Caco-2 (cell line): ENCODE measurements at regions of chr1 and their contacts with region 1.

Region 1: DNA sequence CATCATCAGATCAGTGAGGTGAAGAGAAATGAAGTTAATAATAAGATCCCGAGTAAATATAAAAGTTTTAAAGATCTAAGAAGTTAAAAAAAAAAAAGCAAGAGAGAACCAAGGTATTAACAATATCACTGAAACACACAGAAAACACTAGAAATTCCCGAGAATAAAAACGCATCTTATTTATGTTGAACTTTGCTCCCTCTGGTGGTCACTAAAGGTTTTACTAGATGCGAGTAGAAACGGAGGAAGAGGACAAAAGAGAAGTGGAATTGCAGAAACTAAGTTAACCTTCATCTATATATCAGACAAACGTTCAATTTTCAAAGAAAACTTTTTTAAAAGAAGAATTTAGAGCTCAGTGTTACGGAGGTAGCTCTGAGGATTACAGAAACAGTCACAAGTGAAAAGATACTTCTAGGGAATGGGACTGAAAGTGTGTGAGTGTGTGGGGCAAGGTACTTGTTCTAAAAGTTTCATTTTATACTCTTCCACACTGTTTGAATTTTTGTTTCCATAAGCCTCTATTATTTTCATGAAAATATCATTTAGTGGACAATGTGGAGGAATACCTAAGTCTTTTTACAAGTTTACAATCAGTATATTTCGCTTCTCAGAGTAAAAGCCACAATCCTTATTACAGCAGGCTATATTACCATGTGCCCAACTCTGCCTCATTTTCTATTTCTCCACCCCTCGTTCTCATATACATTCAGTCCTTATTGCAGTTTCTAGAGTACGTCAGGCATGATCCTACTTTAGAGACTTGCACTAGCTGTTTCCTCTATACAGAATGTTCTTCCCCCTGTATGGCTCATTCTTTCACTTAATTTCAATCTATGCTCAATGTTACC is 19.7 kb downstream of the ACBD6 start:
- DNase-seq: peak in 1 of 2 experiments; percentile 41
- H3K4me3 ChIP-seq: no peak overlapping the region
- H3K4me3 Mint-ChIP-seq: no peak overlapping the region
- H3K27ac Mint-ChIP-seq: no peak overlapping the region
- H3K4me1 ChIP-seq: no peaks in the 10 kb centered on the region
- H3K4me1 Mint-ChIP-seq: no peaks in the 10 kb centered on the region
- H3K27me3 ChIP-seq: no peaks in the 10 kb centered on the region
- H3K27me3 Mint-ChIP-seq: no peaks in the 10 kb centered on the region
- CTCF ChIP-seq: peak; percentile 65 to 71

Region 2: GRCh38 chr1:180188091-180188506 is 294.6 kb before region 1 on chr1:
- CTCF ChIA-PET with region 1: interaction called, 3 read pairs
- POLR2A ChIA-PET with region 1: no interaction called
- intact Hi-C with region 1: loop called (anchors 1 kb)
- DNase-seq: peak; percentile 80 to 82
- H3K4me3 ChIP-seq: no peak overlapping the region
- H3K4me3 Mint-ChIP-seq: no peak overlapping the region
- H3K27ac Mint-ChIP-seq: no peak overlapping the region
- H3K4me1 ChIP-seq: no peaks in the 10 kb centered on the region
- H3K4me1 Mint-ChIP-seq: peaks cover 6% of the 10 kb centered on the region
- H3K27me3 ChIP-seq: no peaks in the 10 kb centered on the region
- H3K27me3 Mint-ChIP-seq: no peaks in the 10 kb centered on the region
- CTCF ChIP-seq: peak; percentile 85 to 95

Region 3: DNA sequence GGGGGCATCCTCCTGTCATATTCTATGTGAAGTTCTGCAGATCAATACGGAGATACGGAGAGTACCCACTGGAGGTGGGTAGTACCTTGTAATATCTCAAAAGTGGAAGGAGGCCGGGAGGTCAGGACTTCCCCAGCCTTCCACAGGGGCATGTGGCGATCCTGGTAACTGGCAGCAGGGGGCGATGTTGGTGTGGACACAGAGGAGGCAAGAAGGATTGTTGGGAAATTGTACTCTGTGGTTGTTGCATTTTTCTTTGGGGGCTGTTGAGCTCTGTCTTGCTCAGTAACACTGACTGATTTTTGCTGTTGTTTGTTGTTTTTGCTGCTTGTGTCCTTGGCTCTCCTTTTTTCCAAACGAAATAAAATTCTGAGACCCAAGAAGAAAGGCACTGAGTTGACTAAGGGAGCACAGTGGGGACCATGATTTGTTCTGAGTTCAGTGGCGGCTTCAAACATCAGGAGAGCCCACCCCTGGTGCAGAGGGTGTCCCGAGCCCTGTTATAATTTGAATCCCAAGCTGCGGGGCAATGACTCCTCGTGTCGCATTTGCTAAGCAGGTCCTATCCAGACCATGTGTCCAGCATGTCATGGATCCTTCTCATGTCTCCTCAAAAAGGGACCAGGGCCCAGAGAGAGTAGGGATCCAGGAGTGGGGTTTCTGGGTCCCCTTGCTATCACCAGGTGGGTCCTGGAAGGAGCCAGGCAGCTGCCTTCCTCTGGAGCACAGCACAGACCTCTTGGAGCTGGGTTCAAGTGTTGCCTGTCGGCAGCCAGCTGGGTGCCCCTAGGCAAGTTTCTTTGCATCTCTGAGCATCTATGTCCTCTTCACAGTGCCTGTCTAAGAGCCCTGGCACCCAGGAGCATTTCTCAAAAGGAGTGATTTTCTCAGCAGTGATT is 229.8 kb before region 1 on chr1:
- CTCF ChIA-PET with region 1: no interaction called
- POLR2A ChIA-PET with region 1: no interaction called
- intact Hi-C with region 1: loop called (anchors 1 kb)
- DNase-seq: peak; percentile 78 to 80
- H3K4me3 ChIP-seq: no peak overlapping the region
- H3K4me3 Mint-ChIP-seq: no peak overlapping the region
- H3K27ac Mint-ChIP-seq: no peak overlapping the region
- H3K4me1 ChIP-seq: no peaks in the 10 kb centered on the region
- H3K4me1 Mint-ChIP-seq: no peaks in the 10 kb centered on the region
- H3K27me3 ChIP-seq: no peaks in the 10 kb centered on the region
- H3K27me3 Mint-ChIP-seq: no peaks in the 10 kb centered on the region
- CTCF ChIP-seq: peak; percentile 63 to 85

Region 4: DNA sequence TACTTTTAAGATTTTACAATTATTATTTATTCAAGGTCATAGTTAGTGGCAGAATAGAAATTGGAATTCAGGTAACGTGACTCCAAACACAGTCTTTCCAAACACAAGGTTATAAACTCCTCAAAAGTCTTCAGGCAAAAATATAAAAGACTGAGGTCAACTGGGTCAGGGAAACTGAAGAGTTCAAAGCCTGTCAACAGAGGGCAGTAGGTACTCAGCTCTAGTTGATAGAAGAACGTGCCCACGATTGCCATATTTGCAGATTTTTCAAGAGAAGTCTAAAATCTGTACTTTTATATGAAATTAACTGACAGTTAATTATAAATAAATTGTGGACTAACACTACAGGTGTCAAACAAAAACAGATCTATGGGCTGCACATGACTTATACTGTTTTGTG is 117.6 kb before region 1 on chr1:
- CTCF ChIA-PET with region 1: no interaction called
- POLR2A ChIA-PET with region 1: no interaction called
- intact Hi-C with region 1: loop called (anchors 1 kb)
- DNase-seq: no peak
- H3K4me3 ChIP-seq: no peak overlapping the region
- H3K4me3 Mint-ChIP-seq: no peak overlapping the region
- H3K27ac Mint-ChIP-seq: no peak overlapping the region
- H3K4me1 ChIP-seq: no peaks in the 10 kb centered on the region
- H3K4me1 Mint-ChIP-seq: no peaks in the 10 kb centered on the region
- H3K27me3 ChIP-seq: no peaks in the 10 kb centered on the region
- H3K27me3 Mint-ChIP-seq: no peaks in the 10 kb centered on the region
- CTCF ChIP-seq: peak; percentile 43 to 52

Region 5: GRCh38 chr1:180502360-180503273 is 20.0 kb after region 1 on chr1 and contains the start of gene ACBD6:
- CTCF ChIA-PET with region 1: no interaction called
- POLR2A ChIA-PET with region 1: interaction called, 10 read pairs
- intact Hi-C with region 1: no loop called
- DNase-seq: peak; percentile 86 to 91
- H3K4me3 ChIP-seq: peak within 1 kb of the TSS; percentile 67
- H3K4me3 Mint-ChIP-seq: peak within 1 kb of the TSS; percentile 96
- H3K27ac Mint-ChIP-seq: peak within 1 kb of the TSS; percentile 96
- H3K4me1 ChIP-seq: peaks cover 7% of the 10 kb centered on the region; the same call in 1 of the 2 replicates
- H3K4me1 Mint-ChIP-seq: no peaks in the 10 kb centered on the region
- H3K27me3 ChIP-seq: no peaks in the 10 kb centered on the region
- H3K27me3 Mint-ChIP-seq: no peaks in the 10 kb centered on the region
- CTCF ChIP-seq: peak in 1 of 2 experiments; percentile 17
- total RNA-seq, gene ACBD6: 74.7 and 75.6 TPM in 2 replicates

Region 6: DNA sequence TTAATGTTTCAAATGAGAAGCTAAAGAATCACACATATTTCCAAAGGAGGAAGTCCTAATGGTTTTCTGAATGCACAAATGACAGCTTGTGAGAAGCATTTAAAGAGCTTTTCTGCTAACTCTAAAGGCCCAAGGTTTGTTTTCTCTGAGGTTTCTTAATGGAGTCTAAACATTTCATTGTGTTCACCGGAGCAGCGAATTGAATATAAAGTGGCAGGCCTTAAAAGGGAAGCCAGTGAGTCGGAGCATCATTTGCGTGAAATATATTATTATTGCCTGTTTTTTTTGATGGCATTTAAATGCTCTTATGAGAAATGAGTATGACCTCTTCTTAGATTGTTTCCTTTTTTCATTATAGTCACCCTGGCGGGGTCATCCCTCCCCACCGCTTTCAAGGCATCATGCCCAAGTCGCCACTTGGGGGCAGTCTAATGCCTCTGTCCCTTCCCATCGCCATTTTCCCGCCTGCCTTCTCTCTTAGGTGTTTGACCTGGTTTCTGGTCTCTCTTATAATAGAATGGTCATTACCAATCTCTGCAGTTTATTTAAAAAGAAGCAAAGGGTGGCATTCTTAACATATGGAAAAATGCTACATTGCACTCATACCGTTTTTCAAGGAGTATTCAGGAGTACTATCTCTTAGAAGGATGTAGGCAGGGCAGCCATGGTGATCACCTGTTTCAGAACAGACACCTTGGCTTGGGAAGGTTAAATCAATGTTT is 50.8 kb after region 1 on chr1:
- CTCF ChIA-PET with region 1: no interaction called
- POLR2A ChIA-PET with region 1: no interaction called
- intact Hi-C with region 1: no loop called
- DNase-seq: peak; percentile 59 to 77
- H3K4me3 ChIP-seq: no peak overlapping the region
- H3K4me3 Mint-ChIP-seq: no peak overlapping the region
- H3K27ac Mint-ChIP-seq: no peak overlapping the region
- H3K4me1 ChIP-seq: peaks cover 6% of the 10 kb centered on the region; the same call in 1 of the 2 replicates
- H3K4me1 Mint-ChIP-seq: peaks cover 10% of the 10 kb centered on the region
- H3K27me3 ChIP-seq: no peaks in the 10 kb centered on the region
- H3K27me3 Mint-ChIP-seq: no peaks in the 10 kb centered on the region
- CTCF ChIP-seq: peak; percentile 72 to 74